GM10248 (cell line): ENCODE measurements at regions of chr4 and their contacts with region 1.

Region 1: GRCh38 chr4:56626963-56627362 is 54.1 kb downstream of the HOPX start:
- DNase-seq: no peak
- CTCF ChIP-seq: peak; percentile 18

Region 2: DNA sequence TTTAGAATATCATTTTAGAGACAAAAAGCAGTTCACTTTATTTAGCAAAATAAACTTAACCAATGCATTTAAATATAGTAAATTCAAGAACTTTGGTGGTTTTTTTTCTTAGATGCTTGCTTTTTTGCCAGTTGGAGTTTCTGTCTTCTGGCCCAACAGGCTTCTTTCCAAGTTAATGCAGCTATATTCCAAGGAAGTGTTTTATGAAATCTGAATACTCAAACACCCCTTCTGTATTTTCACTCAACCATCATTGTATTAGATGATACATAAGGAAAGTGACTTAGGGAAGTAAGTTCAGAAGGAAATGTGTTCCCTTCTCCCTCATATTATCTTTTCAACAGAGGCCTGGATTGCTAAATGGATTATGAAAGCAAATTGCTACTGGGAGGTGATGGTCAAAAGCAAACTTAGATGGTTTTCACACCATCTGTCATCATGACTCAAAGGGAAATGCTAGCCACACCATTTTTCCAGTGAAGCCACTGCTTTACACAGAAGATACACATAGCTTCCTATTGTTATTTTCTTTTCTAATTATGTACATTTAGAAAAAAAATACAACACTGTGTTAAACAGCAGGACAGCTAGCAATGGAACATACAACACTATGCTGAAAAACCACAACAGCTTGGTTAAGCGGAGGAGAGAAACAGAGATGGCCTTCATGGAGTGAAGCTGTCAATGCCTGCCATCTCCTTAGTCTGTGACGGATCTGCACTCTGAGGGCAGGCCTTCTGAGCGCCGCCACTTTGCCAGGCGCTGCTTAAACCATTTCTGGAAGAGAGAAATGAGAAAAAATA is 21.3 kb after region 1 on chr4:
- CTCF ChIA-PET with region 1: interaction called, 10 read pairs
- POLR2A ChIA-PET with region 1: no interaction called
- DNase-seq: no peak
- CTCF ChIP-seq: no peak

Region 3: GRCh38 chr4:56799824-56800756 is 173.1 kb after region 1 on chr4:
- CTCF ChIA-PET with region 1: interaction called, 19 read pairs
- POLR2A ChIA-PET with region 1: no interaction called
- DNase-seq: peak; percentile 78
- CTCF ChIP-seq: peak; percentile 89

Region 4: GRCh38 chr4:56843421-56843899 is 216.5 kb after region 1 on chr4:
- CTCF ChIA-PET with region 1: interaction called, 23 read pairs
- POLR2A ChIA-PET with region 1: no interaction called
- DNase-seq: no peak
- CTCF ChIP-seq: no peak